ENCODE measurements at regions of chr15 and their contacts with region 1.

Region 1: DNA sequence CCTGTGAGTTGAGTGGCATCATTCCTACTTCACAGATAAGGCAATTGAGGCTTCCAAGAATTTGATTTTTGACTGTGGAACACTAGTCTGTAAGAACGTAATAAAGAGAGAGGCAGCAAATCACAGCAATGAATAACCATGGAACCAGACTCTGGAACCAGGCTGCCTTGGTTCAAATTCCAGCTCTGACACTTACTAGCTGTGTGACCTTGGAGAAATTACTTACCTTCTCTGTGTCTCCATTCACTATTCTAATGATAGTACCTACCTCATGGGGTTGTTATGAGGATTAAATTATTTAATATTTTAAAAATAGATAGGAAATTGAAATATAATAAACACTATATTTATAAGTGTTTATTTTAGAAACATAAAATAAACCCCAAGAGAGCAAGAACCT is 12.6 kb upstream of the IGDCC3 start:
- DNase-seq: no peak
- H3K4me3 ChIP-seq: no peak overlapping the region
- H3K4me3 Mint-ChIP-seq: no peak overlapping the region
- H3K27ac ChIP-seq: no peak overlapping the region
- H3K27ac Mint-ChIP-seq: no peak overlapping the region
- H3K4me1 ChIP-seq: peaks cover under 1% of the 10 kb centered on the region
- H3K4me1 Mint-ChIP-seq: peaks cover 0 to 4% (median 0%) of the 10 kb centered on the region in 3 donors
- H3K27me3 ChIP-seq: peaks cover 12% of the 10 kb centered on the region
- H3K27me3 Mint-ChIP-seq: peaks cover 32 to 42% of the 10 kb centered on the region in 2 donors

Region 2: DNA sequence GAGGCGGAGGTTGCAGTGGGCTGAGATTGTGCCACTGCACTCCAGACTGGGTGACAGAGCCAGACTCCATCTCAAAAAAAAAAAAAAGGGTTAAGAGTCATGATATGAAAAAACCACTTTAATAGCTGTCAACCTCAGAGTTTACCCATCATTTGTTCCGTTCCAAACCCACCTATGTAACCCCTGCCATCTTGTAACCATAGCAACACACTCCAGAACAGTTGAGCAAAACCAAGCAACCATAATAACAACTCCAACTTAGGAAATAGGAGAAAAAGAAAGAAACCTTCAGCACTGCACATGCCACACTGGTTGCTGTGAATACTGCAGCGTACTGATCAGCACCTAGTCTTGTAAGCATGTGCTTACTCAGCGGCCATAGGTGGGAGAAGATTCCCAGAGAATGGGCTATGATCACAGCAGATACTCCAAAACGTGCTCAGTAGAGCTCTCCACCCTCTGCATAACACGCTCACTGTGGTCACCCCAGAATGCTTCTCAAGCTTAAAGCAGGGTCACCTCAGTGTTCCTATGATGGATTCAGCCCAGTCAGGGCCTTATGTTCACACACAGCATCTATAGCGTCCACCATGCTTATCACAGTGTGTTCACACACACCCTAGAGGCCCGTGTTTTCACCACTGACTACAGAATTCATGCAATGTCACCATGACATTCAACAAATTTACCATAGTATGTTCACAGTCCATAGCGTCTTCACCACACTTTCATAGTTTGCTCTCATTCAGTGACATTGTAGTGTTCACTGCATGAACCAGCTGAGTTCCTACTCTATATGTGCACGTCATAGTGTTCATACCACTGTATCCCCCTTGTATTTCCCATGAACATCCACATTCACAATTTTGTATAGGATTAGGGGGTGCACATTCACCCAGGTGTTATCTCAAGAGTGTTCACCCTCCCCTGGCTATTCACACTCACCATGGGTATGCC is 172.6 kb before region 1 on chr15:
- CTCF ChIA-PET with region 1: interaction called, 4 read pairs
- POLR2A ChIA-PET with region 1: interaction called, 10 read pairs
- DNase-seq: peak in 1 of 5 donors; percentile 4
- H3K4me3 ChIP-seq: no peak overlapping the region
- H3K4me3 Mint-ChIP-seq: no peak overlapping the region
- H3K27ac ChIP-seq: peak overlapping the region; percentile 2
- H3K27ac Mint-ChIP-seq: peak overlapping the region in 1 of 8 donors; percentile 5
- H3K4me1 ChIP-seq: no peaks in the 10 kb centered on the region
- H3K4me1 Mint-ChIP-seq: peaks cover 2 to 9% (median 5%) of the 10 kb centered on the region in 3 donors
- H3K27me3 ChIP-seq: no peaks in the 10 kb centered on the region
- H3K27me3 Mint-ChIP-seq: no peaks in the 10 kb centered on the region

Region 3: DNA sequence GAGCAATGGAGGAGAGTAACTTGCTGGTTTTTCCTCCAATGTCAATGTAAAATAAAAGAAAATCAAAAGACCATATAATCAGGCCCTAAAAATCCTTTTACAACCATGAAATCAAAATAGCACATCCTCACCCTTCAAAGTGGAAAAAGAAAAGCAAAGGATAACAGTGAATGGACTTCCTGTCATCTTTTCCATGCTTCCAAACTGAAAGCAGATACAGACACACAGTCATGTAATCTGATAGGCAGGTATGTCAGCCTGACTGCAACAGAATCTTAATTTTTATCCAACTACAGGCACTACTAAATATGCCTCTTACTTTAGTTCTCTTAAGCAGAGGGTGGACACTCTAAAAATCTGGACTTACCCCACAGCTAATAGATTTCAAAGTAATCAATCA is 60.1 kb after region 1 on chr15:
- CTCF ChIA-PET with region 1: no interaction called
- POLR2A ChIA-PET with region 1: no interaction called
- DNase-seq: no peak
- H3K4me3 ChIP-seq: no peak overlapping the region
- H3K4me3 Mint-ChIP-seq: no peak overlapping the region
- H3K27ac ChIP-seq: no peak overlapping the region
- H3K27ac Mint-ChIP-seq: no peak overlapping the region
- H3K4me1 ChIP-seq: no peaks in the 10 kb centered on the region
- H3K4me1 Mint-ChIP-seq: no peaks in the 10 kb centered on the region
- H3K27me3 ChIP-seq: no peaks in the 10 kb centered on the region
- H3K27me3 Mint-ChIP-seq: no peaks in the 10 kb centered on the region

Measured in CD8-positive, alpha-beta memory T cell (primary cell).